ENCODE measurements at regions of chr3 and their contacts with region 1.

Region 1: GRCh38 chr3:170953229-170953628 is 44.8 kb upstream of the EIF5A2 start:
- DNase-seq: no peak
- ATAC-seq: no peak
- H3K4me3 ChIP-seq: no peak overlapping the region
- H3K27ac ChIP-seq: no peak overlapping the region
- H3K4me1 ChIP-seq: no peaks in the 10 kb centered on the region
- H3K27me3 ChIP-seq: peaks cover 0 to 9% (median 0%) of the 10 kb centered on the region in 3 donors
- CTCF ChIP-seq: no peak

Region 2: DNA sequence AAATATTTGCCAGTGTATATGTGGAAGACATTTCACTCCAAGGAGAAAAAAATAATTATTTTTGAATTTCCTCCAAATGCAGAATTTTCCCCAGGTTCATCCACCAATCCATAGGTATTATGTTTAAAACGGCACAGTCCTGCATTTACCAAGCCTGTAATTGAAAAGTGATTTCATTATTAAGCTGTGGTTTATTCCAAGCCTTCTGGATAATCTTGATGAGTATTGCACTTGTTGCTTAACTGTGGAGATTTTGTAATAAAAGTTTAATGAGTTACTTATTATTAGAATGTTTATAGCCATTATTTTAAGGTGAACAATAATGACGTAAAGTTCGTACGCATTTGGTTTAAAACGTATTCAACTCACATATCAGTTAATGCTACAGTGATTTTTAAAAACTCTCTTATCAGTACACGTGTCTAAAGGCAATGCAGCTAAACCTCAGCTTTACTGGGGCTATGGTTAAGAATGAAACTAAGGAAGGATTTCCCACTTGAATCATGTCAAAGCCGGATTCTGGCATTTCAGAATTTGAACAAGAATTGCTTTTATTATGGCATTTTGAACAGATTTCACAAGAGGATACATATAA is 1573.6 kb before region 1 on chr3:
- intact Hi-C with region 1: loop called in 1 of 2 experiments (anchors 10 kb)
- DNase-seq: no peak
- ATAC-seq: no peak
- H3K4me3 ChIP-seq: no peak overlapping the region
- H3K27ac ChIP-seq: no peak overlapping the region
- H3K4me1 ChIP-seq: no peaks in the 10 kb centered on the region
- H3K27me3 ChIP-seq: no peaks in the 10 kb centered on the region
- CTCF ChIP-seq: no peak

Region 3: DNA sequence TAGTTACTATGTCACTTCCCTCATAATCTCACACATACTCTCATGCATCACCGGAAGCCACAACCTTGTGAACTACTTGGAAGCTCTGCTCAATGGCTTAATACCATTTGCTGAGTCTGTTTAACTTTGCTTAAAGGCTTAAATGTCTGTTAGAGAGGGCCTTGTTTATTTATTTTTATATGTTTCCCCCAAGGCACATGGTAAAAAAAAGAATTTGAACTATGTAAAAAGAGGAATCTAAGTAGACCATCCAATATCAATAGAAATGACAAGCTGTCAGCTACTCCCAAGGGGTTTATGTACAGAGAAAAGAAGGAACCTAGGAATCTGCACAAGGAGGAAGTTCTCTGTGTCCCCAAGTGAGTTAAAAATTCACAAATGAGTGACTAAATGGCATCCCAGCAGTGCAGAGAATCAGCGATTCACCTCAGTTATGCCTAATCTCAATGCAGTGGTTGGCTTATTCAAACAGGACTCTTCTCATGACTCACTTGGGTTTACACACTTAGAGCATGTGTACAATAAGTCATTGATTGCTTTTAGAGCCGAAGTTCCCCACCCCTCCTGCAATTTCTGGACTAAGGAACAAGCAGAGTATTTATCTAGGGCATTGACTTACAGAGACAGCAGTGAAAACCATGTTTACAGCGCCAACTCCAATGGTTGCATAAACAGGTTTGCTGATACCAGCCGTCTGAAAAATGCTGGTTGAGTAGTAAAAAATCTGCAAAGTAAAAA is 48.9 kb after region 1 on chr3:
- intact Hi-C with region 1: no loop called
- DNase-seq: no peak
- ATAC-seq: no peak
- H3K4me3 ChIP-seq: no peak overlapping the region
- H3K27ac ChIP-seq: no peak overlapping the region
- H3K4me1 ChIP-seq: no peaks in the 10 kb centered on the region
- H3K27me3 ChIP-seq: no peaks in the 10 kb centered on the region
- CTCF ChIP-seq: no peak

Region 4: GRCh38 chr3:171574556-171575240 is 621.5 kb after region 1 on chr3:
- intact Hi-C with region 1: no loop called
- DNase-seq: no peak
- ATAC-seq: no peak
- H3K4me3 ChIP-seq: no peak overlapping the region
- H3K27ac ChIP-seq: no peak overlapping the region
- H3K4me1 ChIP-seq: no peaks in the 10 kb centered on the region
- H3K27me3 ChIP-seq: no peaks in the 10 kb centered on the region
- CTCF ChIP-seq: no peak

Measured in psoas muscle (tissue), 8 donors.